CD8-positive, alpha-beta T cell (primary cell): ENCODE measurements at regions of chr19 and their contacts with region 1.

Region 1: DNA sequence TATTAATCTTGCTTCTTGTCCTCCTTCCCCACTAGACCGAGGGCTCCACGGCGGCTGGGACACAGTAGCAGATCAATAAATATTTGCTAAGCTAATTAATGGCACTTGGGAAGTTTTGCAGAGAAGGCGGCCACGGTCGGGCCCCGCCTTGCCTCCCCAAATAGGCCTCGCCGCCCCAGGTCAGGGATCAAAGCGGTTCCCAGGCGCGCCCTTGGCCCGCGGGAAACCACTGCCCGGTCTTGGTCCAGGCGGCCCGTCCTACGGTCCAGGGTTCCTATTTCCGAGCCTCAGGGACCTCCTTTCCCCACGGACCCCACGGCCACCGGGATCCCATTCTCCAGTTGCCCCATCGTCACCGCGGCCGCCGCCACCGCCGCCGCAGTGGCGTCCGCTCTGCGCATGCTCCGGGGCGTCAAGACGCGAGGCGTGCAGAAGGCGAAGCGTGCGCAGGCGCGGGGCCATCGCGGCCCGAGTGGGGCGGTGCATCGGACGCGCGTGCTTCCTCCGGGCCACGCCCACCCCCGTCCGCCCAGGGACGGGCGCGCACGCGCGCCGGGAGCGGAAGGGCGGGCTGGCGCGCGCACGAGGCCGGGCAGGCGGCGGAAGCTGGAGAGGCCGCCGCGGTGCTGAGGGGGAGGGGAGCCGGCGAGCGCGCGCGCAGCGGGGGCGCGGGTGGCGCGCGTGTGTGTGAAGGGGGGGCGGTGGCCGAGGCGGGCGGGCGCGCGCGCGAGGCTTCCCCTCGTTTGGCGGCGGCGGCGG is at the start of gene SMARCA4:
- DNase-seq: peak; percentile 95 to 100 (median 99)
- ATAC-seq: peak; percentile 81
- H3K4me3 ChIP-seq: peak within 1 kb of the TSS; percentile 79 to 83
- H3K4me3 Mint-ChIP-seq: peak within 1 kb of the TSS; percentile 88
- H3K27ac ChIP-seq: peak within 1 kb of the TSS; percentile 87 to 88
- H3K27ac Mint-ChIP-seq: peak within 1 kb of the TSS; percentile 92
- H3K4me1 ChIP-seq: peaks cover 35% of the 10 kb centered on the region
- H3K4me1 Mint-ChIP-seq: peaks cover 34% of the 10 kb centered on the region
- H3K27me3 ChIP-seq: no peaks in the 10 kb centered on the region
- H3K27me3 Mint-ChIP-seq: no peaks in the 10 kb centered on the region
- CTCF ChIP-seq: no peak
- total RNA-seq, gene SMARCA4: 73.5 to 76.2 TPM

Region 2: DNA sequence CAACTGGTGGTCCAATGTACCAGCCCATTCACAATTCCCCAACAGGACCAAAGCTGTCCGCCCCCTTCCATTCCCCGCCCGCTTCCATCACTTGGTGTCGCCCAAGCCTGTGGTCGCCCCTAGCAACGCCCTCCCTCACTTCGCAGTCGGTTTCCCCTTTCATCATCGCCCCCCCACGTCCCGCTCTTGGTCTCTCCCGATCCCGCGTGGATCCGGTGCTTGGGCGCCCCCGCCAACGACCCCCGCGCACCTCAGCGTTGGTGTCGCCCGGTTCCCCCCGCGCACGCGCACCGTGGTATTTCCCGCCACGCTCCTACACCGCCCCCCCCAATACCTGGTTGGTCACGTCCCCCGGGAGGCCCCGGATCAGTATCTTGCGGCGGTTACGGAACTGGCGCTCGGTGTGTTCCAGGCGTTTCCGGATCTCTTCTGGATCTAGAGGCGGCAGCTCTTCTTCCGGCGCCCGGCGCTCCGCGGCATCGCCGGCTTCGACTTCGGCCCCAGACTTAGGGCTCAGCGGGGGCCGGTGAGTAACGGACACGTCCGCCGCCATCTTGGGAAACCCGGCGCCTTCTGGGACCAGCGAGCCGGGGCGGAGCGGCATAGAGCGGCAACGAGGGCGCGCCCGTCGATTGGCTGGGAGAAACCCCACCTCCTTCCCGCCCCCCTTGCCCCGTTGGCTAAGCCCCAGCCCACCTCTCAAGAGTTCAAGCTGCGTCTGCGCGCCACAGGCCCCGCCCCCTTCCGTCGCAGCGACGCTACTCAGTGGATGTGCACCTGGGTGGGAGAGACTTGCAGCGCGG is 627.3 kb before region 1 on chr19 and contains the start of gene RAVER1:
- CTCF ChIA-PET with region 1: no interaction called
- POLR2A ChIA-PET with region 1: no interaction called
- intact Hi-C with region 1: loop called in 1 of 2 experiments (anchors 5 kb)
- DNase-seq: peak; percentile 94 to 99 (median 98)
- ATAC-seq: peak; percentile 96
- H3K4me3 ChIP-seq: peak within 1 kb of the TSS; percentile 93 to 97
- H3K4me3 Mint-ChIP-seq: peak within 1 kb of the TSS; percentile 95
- H3K27ac ChIP-seq: peak within 1 kb of the TSS; percentile 76 to 95
- H3K27ac Mint-ChIP-seq: peak within 1 kb of the TSS; percentile 93
- H3K4me1 ChIP-seq: peaks cover 30% of the 10 kb centered on the region
- H3K4me1 Mint-ChIP-seq: peaks cover 35% of the 10 kb centered on the region
- H3K27me3 ChIP-seq: no peaks in the 10 kb centered on the region
- H3K27me3 Mint-ChIP-seq: no peaks in the 10 kb centered on the region
- CTCF ChIP-seq: no peak
- total RNA-seq, gene RAVER1: 33.3 to 33.6 TPM

Region 3: GRCh38 chr19:10870955-10871603 is 89.4 kb before region 1 on chr19 and contains the start of gene CARM1:
- CTCF ChIA-PET with region 1: no interaction called
- POLR2A ChIA-PET with region 1: no interaction called
- intact Hi-C with region 1: loop called (anchors 1 kb)
- DNase-seq: peak; percentile 97 to 99 (median 99)
- ATAC-seq: peak; percentile 87
- H3K4me3 ChIP-seq: peak within 1 kb of the TSS; percentile 59 to 62
- H3K4me3 Mint-ChIP-seq: peak within 1 kb of the TSS; percentile 89
- H3K27ac ChIP-seq: peak within 1 kb of the TSS; percentile 37 to 76
- H3K27ac Mint-ChIP-seq: peak within 1 kb of the TSS; percentile 84
- H3K4me1 ChIP-seq: peaks cover 17% of the 10 kb centered on the region
- H3K4me1 Mint-ChIP-seq: peaks cover 19% of the 10 kb centered on the region
- H3K27me3 ChIP-seq: no peaks in the 10 kb centered on the region
- H3K27me3 Mint-ChIP-seq: no peaks in the 10 kb centered on the region
- CTCF ChIP-seq: no peak
- total RNA-seq, gene CARM1: 18.1 to 21.3 TPM

Region 4: GRCh38 chr19:10936661-10937084 is 23.8 kb before region 1 on chr19:
- CTCF ChIA-PET with region 1: interaction called, 19 read pairs
- POLR2A ChIA-PET with region 1: no interaction called
- intact Hi-C with region 1: no loop called
- DNase-seq: peak in 5 of 9 experiments; percentile 33 to 76 (median 50)
- ATAC-seq: peak; percentile 79
- H3K4me3 ChIP-seq: no peak overlapping the region
- H3K4me3 Mint-ChIP-seq: no peak overlapping the region
- H3K27ac ChIP-seq: no peak overlapping the region
- H3K27ac Mint-ChIP-seq: no peak overlapping the region
- H3K4me1 ChIP-seq: no peaks in the 10 kb centered on the region
- H3K4me1 Mint-ChIP-seq: peaks cover 8% of the 10 kb centered on the region
- H3K27me3 ChIP-seq: no peaks in the 10 kb centered on the region
- H3K27me3 Mint-ChIP-seq: no peaks in the 10 kb centered on the region
- CTCF ChIP-seq: peak; percentile 60

Region 5: GRCh38 chr19:11090054-11090900 is 129.8 kb after region 1 on chr19:
- CTCF ChIA-PET with region 1: interaction called, 4 read pairs
- POLR2A ChIA-PET with region 1: no interaction called
- intact Hi-C with region 1: loop called (anchors 1 to 2 kb)
- DNase-seq: peak; percentile 95 to 98 (median 98)
- ATAC-seq: peak; percentile 84
- H3K4me3 ChIP-seq: peak overlapping the region; percentile 78 to 93
- H3K4me3 Mint-ChIP-seq: peak overlapping the region; percentile 86
- H3K27ac ChIP-seq: peak overlapping the region; percentile 97 to 99
- H3K27ac Mint-ChIP-seq: peak overlapping the region; percentile 96
- H3K4me1 ChIP-seq: peaks cover 44% of the 10 kb centered on the region
- H3K4me1 Mint-ChIP-seq: peaks cover 47% of the 10 kb centered on the region
- H3K27me3 ChIP-seq: no peaks in the 10 kb centered on the region
- H3K27me3 Mint-ChIP-seq: no peaks in the 10 kb centered on the region
- CTCF ChIP-seq: no peak

Region 6: GRCh38 chr19:11380653-11381534 is 420.4 kb after region 1 on chr19:
- CTCF ChIA-PET with region 1: no interaction called
- POLR2A ChIA-PET with region 1: no interaction called
- intact Hi-C with region 1: loop called in 1 of 2 experiments (anchors 5 kb)
- DNase-seq: peak; percentile 93 to 99 (median 96)
- ATAC-seq: peak; percentile 83
- H3K4me3 ChIP-seq: peak overlapping the region; percentile 64 to 72
- H3K4me3 Mint-ChIP-seq: peak overlapping the region; percentile 94
- H3K27ac ChIP-seq: peak overlapping the region; percentile 80 to 89
- H3K27ac Mint-ChIP-seq: peak overlapping the region; percentile 99
- H3K4me1 ChIP-seq: peaks cover 47% of the 10 kb centered on the region
- H3K4me1 Mint-ChIP-seq: peaks cover 45% of the 10 kb centered on the region
- H3K27me3 ChIP-seq: peaks cover 6 to 23% of the 10 kb centered on the region in 2 experiments
- H3K27me3 Mint-ChIP-seq: peaks cover 19% of the 10 kb centered on the region
- CTCF ChIP-seq: peak; percentile 88